ENCODE measurements at regions of chr2 and their contacts with region 1.

Region 1: GRCh38 chr2:138059487-138060300 is 95.4 kb downstream of the HNMT start:
- DNase-seq: no peak
- H3K4me3 ChIP-seq: no peak overlapping the region
- CTCF ChIP-seq: no peak
- POLR2A ChIP-seq: no peak

Region 2: GRCh38 chr2:137964066-137964858 is 95.4 kb before region 1 on chr2 and contains the start of gene HNMT:
- intact Hi-C with region 1: loop called (anchors 10 kb)
- DNase-seq: peak; percentile 23 to 89
- H3K4me3 ChIP-seq: peak within 1 kb of the TSS; percentile 32
- CTCF ChIP-seq: no peak
- POLR2A ChIP-seq: no peak
- total RNA-seq, gene HNMT: 21.3 to 33.1 (median 28.8) TPM

Region 3: DNA sequence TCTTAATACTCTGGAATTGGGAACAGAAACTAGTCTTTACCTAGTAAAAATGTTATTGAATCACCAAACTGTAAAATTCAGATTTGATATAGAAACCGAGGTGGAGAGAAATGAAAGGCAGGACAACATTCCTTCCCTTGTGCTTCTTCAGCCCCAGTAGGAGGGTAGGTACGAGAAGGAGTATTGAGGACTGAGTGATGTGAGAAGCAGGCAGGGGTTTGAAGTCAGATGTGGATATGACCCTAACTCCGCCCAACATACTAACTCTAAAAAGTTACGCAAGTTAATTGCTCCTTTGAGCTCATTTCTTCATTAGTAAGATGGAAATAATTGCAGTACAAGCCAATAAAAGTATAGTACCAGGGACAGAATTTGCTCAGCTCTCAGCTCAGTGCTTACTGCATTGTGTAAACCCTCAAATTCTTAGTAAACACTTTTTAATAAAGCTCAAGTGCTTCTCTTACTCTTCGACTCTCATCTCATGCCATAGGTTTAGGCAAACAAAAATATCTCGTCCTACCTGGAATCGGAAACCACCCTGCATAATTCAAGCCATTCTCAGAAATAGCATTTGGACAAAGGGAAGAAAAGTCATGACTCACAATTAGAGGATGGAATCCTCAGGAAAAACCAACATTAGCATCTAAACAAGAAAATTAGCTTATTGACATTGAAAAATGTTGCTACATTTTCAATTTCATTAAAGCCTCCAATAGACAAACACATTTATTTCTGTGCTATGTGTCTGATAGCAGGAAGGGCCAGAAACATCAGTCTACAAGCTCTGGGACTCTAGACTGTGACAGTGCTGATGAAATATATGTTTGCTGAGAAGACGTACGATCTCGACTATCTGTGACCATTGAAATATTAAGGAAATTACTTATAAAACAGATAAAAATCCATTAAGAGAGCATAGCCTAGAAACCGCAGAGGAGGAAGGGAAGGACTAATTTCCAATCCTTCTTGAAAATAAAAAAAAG is 65.9 kb after region 1 on chr2:
- intact Hi-C with region 1: no loop called
- DNase-seq: no peak
- H3K4me3 ChIP-seq: no peak overlapping the region
- CTCF ChIP-seq: no peak
- POLR2A ChIP-seq: no peak

Measured in lower leg skin (tissue), 4 donors.